Ovary (tissue), 10 donors: ENCODE measurements at regions of chr13 and their contacts with region 1.

Region 1: GRCh38 chr13:36057029-36057428 is 74.2 kb downstream of the DCLK1 start:
- DNase-seq: no peak
- H3K4me3 ChIP-seq: no peak overlapping the region
- H3K27ac ChIP-seq: no peak overlapping the region
- H3K4me1 ChIP-seq: peaks cover 4% of the 10 kb centered on the region
- H3K27me3 ChIP-seq: no peaks in the 10 kb centered on the region
- CTCF ChIP-seq: no peak
- EP300 ChIP-seq: no peak
- POLR2A ChIP-seq: no peak

Region 2: DNA sequence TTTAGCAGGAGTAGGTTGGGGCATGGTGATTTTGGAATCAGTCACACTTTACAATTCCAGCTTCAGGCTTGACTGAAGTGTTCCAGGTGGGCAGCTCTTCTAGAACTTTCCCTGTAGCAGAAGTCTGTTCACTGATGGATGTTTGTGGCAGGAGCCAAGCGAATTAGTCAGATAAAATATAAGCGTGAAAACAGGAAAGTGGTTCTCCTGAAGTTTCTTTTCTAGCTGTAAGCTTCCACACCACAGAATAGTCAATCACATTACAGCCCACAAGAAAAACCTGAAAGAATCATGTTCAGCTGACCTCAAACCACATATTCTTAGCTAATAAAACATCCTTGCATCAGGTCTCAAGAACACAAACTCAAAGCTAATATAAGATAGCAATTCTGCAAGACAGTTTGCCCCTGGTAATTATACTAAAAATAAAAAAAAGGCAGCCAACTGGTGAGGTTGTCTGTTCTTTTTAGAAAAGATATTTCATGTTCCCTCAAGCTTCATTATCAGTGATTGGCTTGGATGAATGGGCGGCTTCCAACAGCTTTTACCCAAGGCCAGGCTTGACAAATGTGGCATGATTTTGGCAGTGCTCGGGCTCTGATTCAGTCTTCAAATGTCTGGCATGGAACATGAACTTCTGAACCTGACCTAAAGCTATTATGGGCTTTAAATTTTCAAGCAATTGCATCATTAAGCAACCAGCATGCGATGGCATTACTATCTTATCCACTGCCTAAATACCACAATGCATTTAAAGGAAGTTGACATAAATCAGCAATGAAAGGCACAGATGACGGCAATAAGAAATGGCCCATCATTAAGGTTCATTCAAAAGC is 62.7 kb before region 1 on chr13:
- intact Hi-C with region 1: loop called in 1 of 4 experiments (anchors 10 kb)
- DNase-seq: peak; percentile 27 to 68 (median 57)
- H3K4me3 ChIP-seq: no peak overlapping the region
- H3K27ac ChIP-seq: peak overlapping the region in 1 of 2 donors; percentile 46
- H3K4me1 ChIP-seq: peaks cover 3% of the 10 kb centered on the region
- H3K27me3 ChIP-seq: no peaks in the 10 kb centered on the region
- CTCF ChIP-seq: no peak
- EP300 ChIP-seq: no peak
- POLR2A ChIP-seq: no peak

Region 3: DNA sequence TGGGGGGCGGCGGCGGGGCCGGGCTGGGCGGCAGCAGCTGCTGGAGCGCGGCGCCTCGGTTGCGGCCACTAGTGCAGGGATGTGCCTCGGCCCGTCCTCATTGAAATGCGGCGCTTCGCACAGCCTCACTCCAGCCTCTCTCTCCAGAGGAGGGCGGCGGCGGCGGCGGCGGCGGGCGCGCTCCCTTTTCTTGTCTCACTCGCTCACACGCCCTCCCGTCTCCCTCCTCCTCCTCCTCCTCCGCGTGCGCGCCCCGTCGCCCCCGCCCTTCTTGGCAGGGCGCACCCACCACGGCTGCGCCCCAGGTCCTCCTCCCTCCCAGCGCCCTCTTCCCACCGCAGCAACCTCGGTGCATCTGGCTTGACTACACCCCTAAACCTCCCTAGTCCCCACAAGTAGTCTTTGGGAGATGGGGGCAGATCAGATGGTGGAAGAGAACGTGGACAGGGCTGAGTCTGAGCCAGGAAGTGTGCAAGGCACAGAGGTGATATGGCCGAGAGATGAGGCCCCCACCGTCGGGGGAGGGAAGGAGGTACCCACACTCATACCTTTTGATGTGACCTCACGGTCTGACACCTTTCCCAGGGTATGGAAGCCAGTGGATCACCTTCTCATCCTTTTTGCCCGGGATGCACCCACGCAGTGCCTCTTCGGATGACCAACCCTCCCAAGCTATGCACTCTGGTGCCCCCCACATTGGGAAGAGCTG is 74.3 kb after region 1 on chr13 and contains the start of gene DCLK1:
- intact Hi-C with region 1: loop called in 1 of 4 experiments (anchors 10 kb)
- DNase-seq: peak; percentile 63 to 82 (median 70)
- H3K4me3 ChIP-seq: peak within 1 kb of the TSS; percentile 40
- H3K27ac ChIP-seq: peak within 1 kb of the TSS; percentile 9 to 52
- H3K4me1 ChIP-seq: peaks cover 2% of the 10 kb centered on the region
- H3K27me3 ChIP-seq: no peaks in the 10 kb centered on the region
- CTCF ChIP-seq: no peak
- EP300 ChIP-seq: no peak
- POLR2A ChIP-seq: no peak
- total RNA-seq, gene DCLK1: 8.3 to 37.0 (median 24.0) TPM

Region 4: DNA sequence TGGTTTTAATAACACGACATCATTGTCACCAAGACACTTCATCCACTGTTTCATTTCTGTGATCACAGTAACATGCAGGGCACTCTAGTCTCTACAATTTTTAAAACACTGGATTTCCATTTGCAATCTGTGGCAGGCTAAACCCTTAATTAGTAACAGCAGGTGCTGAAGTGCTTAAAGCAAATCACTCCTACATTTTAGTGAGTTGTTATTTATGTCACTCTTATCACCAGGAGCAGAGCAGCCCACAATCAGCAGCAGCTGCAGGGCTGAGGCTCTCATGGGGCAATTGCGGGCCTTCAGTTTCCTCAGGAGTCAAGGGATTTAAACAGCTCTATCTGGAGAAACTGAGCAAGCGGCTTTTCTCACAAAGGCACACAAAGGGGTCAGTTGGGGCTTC is 155.8 kb after region 1 on chr13:
- intact Hi-C with region 1: no loop called
- DNase-seq: no peak
- H3K4me3 ChIP-seq: no peak overlapping the region
- H3K27ac ChIP-seq: no peak overlapping the region
- H3K4me1 ChIP-seq: no peaks in the 10 kb centered on the region
- H3K27me3 ChIP-seq: no peaks in the 10 kb centered on the region
- CTCF ChIP-seq: no peak
- EP300 ChIP-seq: no peak
- POLR2A ChIP-seq: no peak